IMR-90 (cell line): ENCODE measurements at regions of chr2 and their contacts with region 1.

Region 1: DNA sequence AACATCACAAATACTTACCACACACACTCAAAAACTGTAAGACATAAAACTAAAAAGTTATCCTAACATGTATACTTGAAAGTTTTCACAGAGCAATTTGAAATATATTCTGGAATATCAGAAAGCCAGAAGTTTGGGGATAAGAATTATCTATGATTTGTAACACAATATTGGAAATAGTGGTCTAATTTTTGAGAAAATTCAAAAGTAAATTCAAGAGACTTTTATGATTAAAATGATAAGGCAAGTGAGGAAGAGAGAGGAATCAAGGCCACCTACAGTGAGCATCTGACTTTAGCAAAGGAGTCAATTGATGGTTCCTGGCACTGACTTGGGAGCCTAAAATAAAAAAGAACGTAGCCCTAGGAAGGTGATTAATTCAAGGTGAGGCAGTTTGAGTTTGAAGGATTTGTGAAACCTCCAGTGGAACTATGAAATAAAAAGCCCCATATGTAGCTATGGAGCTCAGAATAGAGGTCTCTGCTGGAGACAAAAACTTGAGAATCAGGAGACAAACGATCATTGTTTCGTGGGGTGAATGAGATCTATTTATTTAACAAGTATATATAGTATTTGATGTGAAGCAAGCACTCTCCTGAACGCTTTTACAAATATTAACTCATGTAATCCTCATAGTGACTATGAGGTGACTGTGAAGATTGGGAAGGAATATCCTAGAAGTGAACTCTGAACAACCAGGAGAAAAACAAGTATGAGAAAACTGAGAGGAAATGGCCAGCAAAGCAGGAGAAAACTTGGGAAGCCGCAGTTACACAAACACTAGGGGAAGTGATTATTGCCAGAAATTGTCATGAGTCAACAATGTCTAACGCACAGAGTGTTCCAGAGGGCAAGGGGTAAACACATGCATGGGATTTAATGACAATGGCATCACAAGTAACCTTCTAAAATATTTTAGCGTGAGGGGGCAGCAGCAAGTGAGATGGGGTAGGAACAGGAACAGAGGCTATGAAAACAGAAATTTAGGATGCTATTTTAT is 12.8 kb downstream of the TFPI start:
- DNase-seq: peak; percentile 94
- ATAC-seq: peak; percentile 87
- H3K4me3 ChIP-seq: no peak overlapping the region
- H3K27ac ChIP-seq: peak overlapping the region; percentile 71
- H3K4me1 ChIP-seq: peaks cover 11% of the 10 kb centered on the region
- H3K27me3 ChIP-seq: no peaks in the 10 kb centered on the region
- CTCF ChIP-seq: no peak
- POLR2A ChIP-seq: no peak
- RAD21 ChIP-seq: no peak

Region 2: DNA sequence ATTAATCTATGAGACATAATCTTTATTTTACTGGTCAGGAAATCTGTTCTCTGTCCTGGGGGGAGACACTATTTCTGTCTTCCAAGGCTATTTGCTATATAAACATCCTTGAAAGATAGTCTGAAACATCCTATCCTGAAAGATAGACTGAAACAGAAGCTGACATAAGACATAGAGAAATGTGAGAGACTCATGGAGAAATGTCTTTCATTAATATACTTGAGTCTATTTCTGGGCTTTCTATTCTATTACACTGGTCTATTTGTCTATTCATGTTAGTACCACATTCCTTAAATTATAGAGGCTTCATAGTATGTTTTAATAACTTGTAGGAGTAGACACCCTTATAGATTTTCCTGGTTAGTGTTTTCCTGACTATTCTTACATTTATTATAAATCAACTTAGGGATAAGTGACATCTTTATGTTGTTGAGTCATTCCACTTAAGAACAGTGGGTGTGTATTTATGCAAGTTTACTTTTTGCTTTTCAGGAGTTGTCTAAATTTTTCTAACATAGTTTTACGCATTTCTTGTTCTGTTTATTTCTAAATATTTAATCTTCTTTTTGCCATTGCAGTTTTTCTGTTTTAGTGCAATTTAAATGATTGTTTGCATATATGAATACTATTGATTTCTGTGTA is 447.5 kb before region 1 on chr2:
- CTCF ChIA-PET with region 1: no interaction called
- POLR2A ChIA-PET with region 1: no interaction called
- dilution Hi-C with region 1: no loop called
- in situ Hi-C with region 1: no loop called
- intact Hi-C with region 1: no loop called
- DNase-seq: no peak
- ATAC-seq: no peak
- H3K4me3 ChIP-seq: no peak overlapping the region
- H3K27ac ChIP-seq: no peak overlapping the region
- H3K4me1 ChIP-seq: no peaks in the 10 kb centered on the region
- H3K27me3 ChIP-seq: no peaks in the 10 kb centered on the region
- CTCF ChIP-seq: no peak
- POLR2A ChIP-seq: no peak
- RAD21 ChIP-seq: no peak

Region 3: DNA sequence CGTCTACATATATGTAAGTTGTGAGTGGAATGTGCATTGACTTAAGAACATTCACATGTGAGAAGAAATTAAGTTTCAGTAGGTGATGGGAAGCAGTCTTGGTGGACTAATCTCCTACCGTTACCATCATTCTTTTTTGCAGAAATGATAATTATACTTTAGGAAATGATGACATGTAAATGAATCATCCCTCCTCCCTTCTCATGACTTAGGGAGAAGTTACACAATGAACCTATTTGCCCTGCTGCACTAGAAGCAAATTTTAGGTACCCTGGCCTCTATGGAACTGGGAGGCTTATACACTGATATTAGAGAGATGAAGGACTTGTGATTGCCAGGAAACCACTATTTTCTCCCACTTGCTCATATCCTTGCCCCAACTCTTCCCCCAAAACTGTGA is 307.6 kb before region 1 on chr2:
- CTCF ChIA-PET with region 1: no interaction called
- POLR2A ChIA-PET with region 1: no interaction called
- dilution Hi-C with region 1: no loop called
- in situ Hi-C with region 1: no loop called
- intact Hi-C with region 1: no loop called
- DNase-seq: no peak
- ATAC-seq: no peak
- H3K4me3 ChIP-seq: no peak overlapping the region
- H3K27ac ChIP-seq: no peak overlapping the region
- H3K4me1 ChIP-seq: no peaks in the 10 kb centered on the region
- H3K27me3 ChIP-seq: no peaks in the 10 kb centered on the region
- CTCF ChIP-seq: no peak
- POLR2A ChIP-seq: no peak
- RAD21 ChIP-seq: no peak

Region 4: DNA sequence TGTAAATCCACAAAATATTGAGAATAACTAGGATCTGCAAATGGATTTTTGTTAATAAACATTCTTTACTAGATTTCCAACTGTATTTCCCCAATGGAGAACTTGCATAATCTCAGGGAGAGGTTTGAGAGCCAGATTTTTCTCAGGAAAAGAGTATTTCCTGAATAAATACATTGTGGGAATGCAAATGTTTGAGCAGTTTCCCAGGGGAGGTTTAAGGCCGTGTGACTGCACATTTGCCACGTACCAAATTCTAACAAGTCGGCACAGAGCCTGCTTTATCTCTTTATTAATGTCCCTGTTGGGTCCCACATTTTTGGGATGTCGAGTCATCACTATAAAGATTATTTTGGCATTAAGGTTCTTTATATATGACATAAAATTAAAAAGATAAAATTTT is 14.1 kb before region 1 on chr2:
- CTCF ChIA-PET with region 1: interaction called, 3 read pairs
- POLR2A ChIA-PET with region 1: no interaction called
- dilution Hi-C with region 1: no loop called
- in situ Hi-C with region 1: no loop called
- intact Hi-C with region 1: loop called (anchors 2 kb)
- DNase-seq: peak; percentile 83
- ATAC-seq: peak; percentile 50
- H3K4me3 ChIP-seq: no peak overlapping the region
- H3K27ac ChIP-seq: peak overlapping the region; percentile 61; the same call in 1 of the 2 replicates
- H3K4me1 ChIP-seq: peaks cover 4% of the 10 kb centered on the region; the same call in 1 of the 2 replicates
- H3K27me3 ChIP-seq: no peaks in the 10 kb centered on the region
- CTCF ChIP-seq: no peak
- POLR2A ChIP-seq: no peak
- RAD21 ChIP-seq: no peak

Region 5: GRCh38 chr2:187594801-187595200 is 53.4 kb after region 1 on chr2:
- CTCF ChIA-PET with region 1: interaction called, 3 read pairs
- POLR2A ChIA-PET with region 1: interaction called, 11 read pairs
- dilution Hi-C with region 1: no loop called
- in situ Hi-C with region 1: no loop called
- intact Hi-C with region 1: no loop called
- DNase-seq: peak; percentile 44
- ATAC-seq: peak; percentile 69
- H3K4me3 ChIP-seq: no peak overlapping the region
- H3K27ac ChIP-seq: no peak overlapping the region
- H3K4me1 ChIP-seq: peaks cover 2% of the 10 kb centered on the region; the same call in 1 of the 2 replicates
- H3K27me3 ChIP-seq: no peaks in the 10 kb centered on the region; the same call in 1 of the 2 replicates
- CTCF ChIP-seq: peak; percentile 49
- POLR2A ChIP-seq: no peak
- RAD21 ChIP-seq: peak; percentile 50

Region 6: GRCh38 chr2:188181067-188181838 is 639.9 kb after region 1 on chr2:
- CTCF ChIA-PET with region 1: no interaction called
- POLR2A ChIA-PET with region 1: no interaction called
- dilution Hi-C with region 1: no loop called
- in situ Hi-C with region 1: no loop called
- intact Hi-C with region 1: no loop called
- DNase-seq: peak; percentile 4
- ATAC-seq: peak; percentile 51; the same call in 1 of the 2 replicates
- H3K4me3 ChIP-seq: no peak overlapping the region; the same call in 1 of the 2 replicates
- H3K27ac ChIP-seq: no peak overlapping the region
- H3K4me1 ChIP-seq: no peaks in the 10 kb centered on the region; the same call in none of the 2 replicates
- H3K27me3 ChIP-seq: no peaks in the 10 kb centered on the region
- CTCF ChIP-seq: no peak
- POLR2A ChIP-seq: no peak
- RAD21 ChIP-seq: no peak